ENCODE measurements at regions of chr1 and their contacts with region 1.

Region 1: GRCh38 chr1:19651141-19651737 is 7.1 kb downstream of the NBL1 start:
- DNase-seq: peak; percentile 25 to 71 (median 54)
- ATAC-seq: peak; percentile 58
- H3K4me3 ChIP-seq: no peak overlapping the region
- H3K4me3 Mint-ChIP-seq: no peak overlapping the region
- H3K27ac ChIP-seq: no peak overlapping the region
- H3K27ac Mint-ChIP-seq: no peak overlapping the region
- H3K4me1 ChIP-seq: peaks cover 17% of the 10 kb centered on the region
- H3K4me1 Mint-ChIP-seq: peaks cover 18% of the 10 kb centered on the region
- H3K27me3 ChIP-seq: no peaks in the 10 kb centered on the region
- H3K27me3 Mint-ChIP-seq: no peaks in the 10 kb centered on the region
- CTCF ChIP-seq: peak; percentile 44

Region 2: DNA sequence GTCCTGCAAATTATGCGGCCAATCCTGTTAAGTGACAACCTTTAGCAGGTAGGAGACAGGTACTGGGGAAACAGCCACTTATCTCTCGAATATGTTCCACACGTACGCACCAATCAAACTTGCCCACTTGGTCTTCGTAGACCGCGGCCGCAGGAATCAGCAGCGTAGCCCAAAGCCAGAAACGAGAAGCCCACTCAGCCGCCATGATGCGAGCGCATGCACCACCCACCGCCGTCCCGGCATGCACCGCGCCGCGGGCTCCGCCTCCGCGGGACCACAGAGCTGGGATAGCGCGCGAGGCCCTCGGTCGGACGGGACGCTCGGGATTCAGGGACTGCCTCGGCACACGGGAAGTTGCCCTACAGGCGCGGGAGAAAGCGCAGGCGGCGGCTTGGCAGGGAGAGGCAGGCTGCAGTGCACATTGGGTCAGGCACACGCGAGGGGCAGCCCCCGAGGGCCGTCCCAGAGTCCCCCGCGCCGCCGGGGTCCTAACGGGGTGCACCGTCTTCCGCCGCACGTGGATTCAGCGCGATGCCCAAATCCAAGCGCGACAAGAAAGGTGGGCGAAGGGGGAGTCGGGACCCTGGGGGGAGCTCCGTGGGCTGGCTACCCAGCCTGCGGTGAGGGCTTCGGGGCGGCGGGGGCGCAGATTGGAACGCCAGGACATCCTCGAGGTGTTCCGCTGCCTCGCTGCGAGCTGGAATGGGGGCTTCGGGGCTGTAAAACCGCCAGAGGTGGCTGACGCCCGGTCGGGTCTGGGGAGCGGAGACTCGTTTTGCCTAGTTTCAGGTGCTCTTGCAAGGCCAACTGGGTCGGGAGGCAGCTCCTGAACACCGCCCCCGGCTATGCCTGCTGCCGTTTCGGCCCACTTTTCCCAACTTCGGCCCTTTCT is 399.7 kb before region 1 on chr1 and contains the starts of genes EMC1 and MRTO4:
- CTCF ChIA-PET with region 1: interaction called, 3 read pairs
- POLR2A ChIA-PET with region 1: no interaction called
- intact Hi-C with region 1: loop called (anchors 1 to 5 kb)
- DNase-seq: peak; percentile 83 to 94 (median 87)
- ATAC-seq: peak; percentile 93
- H3K4me3 ChIP-seq: peak within 1 kb of the TSS; percentile 66 to 88
- H3K4me3 Mint-ChIP-seq: peak within 1 kb of the TSS; percentile 95
- H3K27ac ChIP-seq: peak within 1 kb of the TSS; percentile 83 to 98
- H3K27ac Mint-ChIP-seq: peak within 1 kb of the TSS; percentile 94
- H3K4me1 ChIP-seq: peaks cover 34% of the 10 kb centered on the region
- H3K4me1 Mint-ChIP-seq: peaks cover 38% of the 10 kb centered on the region
- H3K27me3 ChIP-seq: no peaks in the 10 kb centered on the region
- H3K27me3 Mint-ChIP-seq: no peaks in the 10 kb centered on the region
- CTCF ChIP-seq: no peak
- total RNA-seq, gene EMC1: 28.2 to 33.5 TPM
- total RNA-seq, gene MRTO4: 18.9 to 19.5 TPM

Region 3: GRCh38 chr1:19390901-19391595 is 260.2 kb before region 1 on chr1:
- CTCF ChIA-PET with region 1: interaction called, 9 read pairs
- POLR2A ChIA-PET with region 1: no interaction called
- intact Hi-C with region 1: loop called (anchors 1 kb)
- DNase-seq: peak; percentile 46 to 87 (median 68)
- ATAC-seq: peak; percentile 70
- H3K4me3 ChIP-seq: peak overlapping the region; percentile 34 to 38
- H3K4me3 Mint-ChIP-seq: peak overlapping the region; percentile 85
- H3K27ac ChIP-seq: peak overlapping the region; percentile 50 to 66
- H3K27ac Mint-ChIP-seq: peak overlapping the region; percentile 90
- H3K4me1 ChIP-seq: peaks cover 54% of the 10 kb centered on the region
- H3K4me1 Mint-ChIP-seq: peaks cover 77% of the 10 kb centered on the region
- H3K27me3 ChIP-seq: no peaks in the 10 kb centered on the region
- H3K27me3 Mint-ChIP-seq: no peaks in the 10 kb centered on the region
- CTCF ChIP-seq: peak; percentile 88

Region 4: DNA sequence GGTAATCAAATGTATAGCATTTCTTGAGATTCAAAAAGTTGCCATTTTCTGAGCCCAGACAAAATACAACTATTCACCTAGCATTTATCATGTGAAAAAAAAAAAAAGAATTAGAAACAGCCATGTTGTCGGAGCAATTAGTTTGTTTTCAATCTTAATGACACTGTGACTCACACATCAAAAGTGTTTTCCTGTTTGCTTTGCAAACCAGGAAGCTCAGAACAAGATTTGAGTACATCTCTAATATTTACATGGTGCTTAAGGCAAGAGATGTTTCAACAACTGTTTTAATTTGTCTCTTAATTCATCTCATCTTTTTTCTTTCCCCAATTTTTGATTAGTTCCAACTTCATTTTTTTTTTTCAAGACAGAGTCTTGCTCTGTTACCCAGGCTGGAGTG is 103.4 kb before region 1 on chr1:
- CTCF ChIA-PET with region 1: no interaction called
- POLR2A ChIA-PET with region 1: no interaction called
- intact Hi-C with region 1: no loop called
- DNase-seq: no peak
- ATAC-seq: no peak
- H3K4me3 ChIP-seq: no peak overlapping the region
- H3K4me3 Mint-ChIP-seq: no peak overlapping the region
- H3K27ac ChIP-seq: no peak overlapping the region
- H3K27ac Mint-ChIP-seq: no peak overlapping the region
- H3K4me1 ChIP-seq: no peaks in the 10 kb centered on the region
- H3K4me1 Mint-ChIP-seq: peaks cover 2% of the 10 kb centered on the region
- H3K27me3 ChIP-seq: peaks cover 0 to 2% of the 10 kb centered on the region in 2 experiments
- H3K27me3 Mint-ChIP-seq: peaks cover 3% of the 10 kb centered on the region
- CTCF ChIP-seq: no peak

Region 5: GRCh38 chr1:19582302-19582701 is 68.9 kb before region 1 on chr1:
- CTCF ChIA-PET with region 1: interaction called, 10 read pairs
- POLR2A ChIA-PET with region 1: no interaction called
- intact Hi-C with region 1: loop called (anchors 1 kb)
- DNase-seq: peak; percentile 58 to 87 (median 80)
- ATAC-seq: peak; percentile 78
- H3K4me3 ChIP-seq: no peak overlapping the region
- H3K4me3 Mint-ChIP-seq: no peak overlapping the region
- H3K27ac ChIP-seq: no peak overlapping the region
- H3K27ac Mint-ChIP-seq: no peak overlapping the region
- H3K4me1 ChIP-seq: no peaks in the 10 kb centered on the region
- H3K4me1 Mint-ChIP-seq: peaks cover 8% of the 10 kb centered on the region
- H3K27me3 ChIP-seq: no peaks in the 10 kb centered on the region
- H3K27me3 Mint-ChIP-seq: no peaks in the 10 kb centered on the region
- CTCF ChIP-seq: peak; percentile 87

Region 6: GRCh38 chr1:19668893-19669292 is 17.7 kb after region 1 on chr1:
- CTCF ChIA-PET with region 1: interaction called, 18 read pairs
- POLR2A ChIA-PET with region 1: no interaction called
- intact Hi-C with region 1: no loop called
- DNase-seq: no peak
- ATAC-seq: no peak
- H3K4me3 ChIP-seq: no peak overlapping the region
- H3K4me3 Mint-ChIP-seq: no peak overlapping the region
- H3K27ac ChIP-seq: no peak overlapping the region
- H3K27ac Mint-ChIP-seq: no peak overlapping the region
- H3K4me1 ChIP-seq: peaks cover 10% of the 10 kb centered on the region
- H3K4me1 Mint-ChIP-seq: peaks cover 18% of the 10 kb centered on the region
- H3K27me3 ChIP-seq: peaks cover 5 to 11% of the 10 kb centered on the region in 2 experiments
- H3K27me3 Mint-ChIP-seq: peaks cover 18% of the 10 kb centered on the region
- CTCF ChIP-seq: no peak

Region 7: DNA sequence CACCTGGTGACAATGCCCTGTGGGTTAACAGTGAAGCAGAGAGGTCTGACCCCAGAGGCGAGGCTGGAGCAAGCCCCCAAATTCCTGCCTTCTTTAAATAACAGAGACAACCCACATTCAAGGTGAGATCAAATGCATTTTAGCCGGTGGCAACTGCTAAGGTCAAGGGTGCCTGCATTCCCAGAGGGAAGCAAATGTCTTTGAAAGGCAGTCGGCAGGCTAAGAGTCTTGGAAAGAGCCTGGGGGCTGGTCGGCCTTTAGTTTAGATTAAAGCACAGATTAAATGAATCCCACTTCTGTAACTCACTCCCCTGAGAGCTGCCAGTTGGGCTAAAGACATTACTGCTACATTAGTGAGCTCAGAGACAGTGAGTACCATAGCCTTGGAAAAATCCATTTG is 72.6 kb after region 1 on chr1:
- CTCF ChIA-PET with region 1: no interaction called
- POLR2A ChIA-PET with region 1: no interaction called
- intact Hi-C with region 1: no loop called
- DNase-seq: no peak
- ATAC-seq: no peak
- H3K4me3 ChIP-seq: no peak overlapping the region
- H3K4me3 Mint-ChIP-seq: no peak overlapping the region
- H3K27ac ChIP-seq: no peak overlapping the region
- H3K27ac Mint-ChIP-seq: no peak overlapping the region
- H3K4me1 ChIP-seq: no peaks in the 10 kb centered on the region
- H3K4me1 Mint-ChIP-seq: no peaks in the 10 kb centered on the region
- H3K27me3 ChIP-seq: no peaks in the 10 kb centered on the region
- H3K27me3 Mint-ChIP-seq: no peaks in the 10 kb centered on the region
- CTCF ChIP-seq: no peak

Measured in CD8-positive, alpha-beta T cell (primary cell).